Activated CD4-positive, alpha-beta memory T cell treated with anti-CD3 and anti-CD28 coated beads for 36 hours (primary cell): ENCODE measurements at regions of chr2 and their contacts with region 1.

Region 1: DNA sequence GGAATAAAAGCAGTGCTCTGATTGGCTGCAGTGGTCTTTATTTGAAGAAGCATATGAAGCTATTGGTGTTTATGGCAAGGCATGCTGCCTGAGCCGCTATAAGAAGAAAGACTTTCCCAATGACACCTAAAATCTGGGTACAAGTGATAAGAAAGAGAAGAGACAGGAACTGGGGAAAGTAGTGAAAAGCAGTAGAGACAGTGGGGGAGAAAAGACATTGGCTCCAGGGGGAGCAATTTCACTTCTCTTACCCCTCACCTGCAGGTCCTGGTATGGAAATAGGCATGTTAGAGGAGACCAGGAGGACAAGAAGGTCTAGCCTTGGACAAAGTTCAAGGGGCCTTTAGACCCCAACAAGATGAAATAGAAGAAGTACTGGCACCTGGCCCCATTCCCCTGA is 47.1 kb downstream of the PLCL1 start:
- DNase-seq: no peak
- H3K4me3 Mint-ChIP-seq: no peak overlapping the region
- H3K27ac Mint-ChIP-seq: no peak overlapping the region
- H3K4me1 Mint-ChIP-seq: peaks cover 56% of the 10 kb centered on the region
- H3K27me3 Mint-ChIP-seq: no peaks in the 10 kb centered on the region

Region 2: GRCh38 chr2:197827618-197828017 is 23.8 kb before region 1 on chr2:
- CTCF ChIA-PET with region 1: no interaction called
- POLR2A ChIA-PET with region 1: no interaction called
- intact Hi-C with region 1: no loop called
- DNase-seq: no peak
- H3K4me3 Mint-ChIP-seq: no peak overlapping the region
- H3K27ac Mint-ChIP-seq: no peak overlapping the region
- H3K4me1 Mint-ChIP-seq: no peaks in the 10 kb centered on the region
- H3K27me3 Mint-ChIP-seq: no peaks in the 10 kb centered on the region

Region 3: GRCh38 chr2:197869501-197870111 is 18.2 kb after region 1 on chr2:
- CTCF ChIA-PET with region 1: interaction called, 6 read pairs
- POLR2A ChIA-PET with region 1: no interaction called
- intact Hi-C with region 1: loop called (anchors 2 kb)
- DNase-seq: peak; percentile 48
- H3K4me3 Mint-ChIP-seq: peak overlapping the region; percentile 68
- H3K27ac Mint-ChIP-seq: peak overlapping the region; percentile 88
- H3K4me1 Mint-ChIP-seq: peaks cover 57% of the 10 kb centered on the region
- H3K27me3 Mint-ChIP-seq: no peaks in the 10 kb centered on the region

Region 4: GRCh38 chr2:197931661-197932312 is 80.3 kb after region 1 on chr2:
- CTCF ChIA-PET with region 1: no interaction called
- POLR2A ChIA-PET with region 1: no interaction called
- intact Hi-C with region 1: loop called (anchors 5 kb)
- DNase-seq: no peak
- H3K4me3 Mint-ChIP-seq: no peak overlapping the region
- H3K27ac Mint-ChIP-seq: no peak overlapping the region
- H3K4me1 Mint-ChIP-seq: peaks cover 46% of the 10 kb centered on the region
- H3K27me3 Mint-ChIP-seq: no peaks in the 10 kb centered on the region

Region 5: DNA sequence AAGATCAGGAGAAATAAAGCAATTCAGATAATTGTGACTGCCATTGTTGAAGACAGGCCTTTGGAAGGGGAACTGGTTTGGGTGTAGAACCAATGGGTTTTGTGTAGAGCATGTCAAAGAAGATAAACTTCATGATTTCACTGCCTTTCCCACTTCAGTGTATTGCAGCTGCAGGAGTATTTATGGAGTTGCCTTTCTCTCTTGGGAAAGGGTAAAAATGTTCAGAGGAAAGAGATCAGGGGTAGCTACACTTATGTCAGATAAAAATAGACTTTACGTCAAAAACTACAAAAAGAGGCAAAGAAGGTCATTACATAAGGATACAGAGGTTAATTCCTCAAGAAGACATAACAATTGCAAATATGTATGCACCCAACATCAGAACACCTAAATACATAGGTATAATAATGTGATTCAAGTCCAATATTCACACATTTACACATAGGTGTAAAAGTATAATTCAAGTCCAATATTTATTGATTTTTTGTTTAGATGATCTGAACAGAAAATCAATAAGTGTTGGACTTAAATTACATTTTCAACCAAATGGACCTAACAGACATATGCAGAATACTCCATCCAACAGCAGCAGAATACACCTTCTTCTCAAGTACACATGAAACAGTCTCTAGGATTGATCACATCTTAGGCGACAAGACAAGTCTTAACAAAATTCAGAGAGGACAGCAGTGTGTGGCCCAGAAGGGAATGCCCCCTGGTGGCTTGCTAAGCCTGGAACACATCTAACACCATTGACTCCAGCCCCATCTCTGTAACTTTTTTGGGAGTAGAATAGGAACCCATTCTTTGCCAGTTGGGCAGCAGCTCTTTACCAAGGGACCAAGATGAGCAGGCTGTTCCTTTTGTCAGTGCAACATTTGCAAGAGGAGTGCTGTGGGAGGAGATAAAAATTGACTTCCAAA is 202.6 kb after region 1 on chr2:
- CTCF ChIA-PET with region 1: interaction called, 4 read pairs
- POLR2A ChIA-PET with region 1: no interaction called
- intact Hi-C with region 1: loop called (anchors 1 kb)
- DNase-seq: peak; percentile 62
- H3K4me3 Mint-ChIP-seq: no peak overlapping the region
- H3K27ac Mint-ChIP-seq: no peak overlapping the region
- H3K4me1 Mint-ChIP-seq: peaks cover 2% of the 10 kb centered on the region
- H3K27me3 Mint-ChIP-seq: no peaks in the 10 kb centered on the region